ENCODE measurements at regions of chr7 and their contacts with region 1.

Region 1: GRCh38 chr7:38222481-38223096 is 44.5 kb downstream of the STARD3NL start:
- DNase-seq: no peak
- H3K4me3 ChIP-seq: no peak overlapping the region
- H3K27ac ChIP-seq: no peak overlapping the region
- H3K4me1 ChIP-seq: no peaks in the 10 kb centered on the region
- H3K27me3 ChIP-seq: no peaks in the 10 kb centered on the region
- CTCF ChIP-seq: peak; percentile 78 to 89 (median 85)
- EP300 ChIP-seq: no peak
- POLR2A ChIP-seq: no peak

Region 2: DNA sequence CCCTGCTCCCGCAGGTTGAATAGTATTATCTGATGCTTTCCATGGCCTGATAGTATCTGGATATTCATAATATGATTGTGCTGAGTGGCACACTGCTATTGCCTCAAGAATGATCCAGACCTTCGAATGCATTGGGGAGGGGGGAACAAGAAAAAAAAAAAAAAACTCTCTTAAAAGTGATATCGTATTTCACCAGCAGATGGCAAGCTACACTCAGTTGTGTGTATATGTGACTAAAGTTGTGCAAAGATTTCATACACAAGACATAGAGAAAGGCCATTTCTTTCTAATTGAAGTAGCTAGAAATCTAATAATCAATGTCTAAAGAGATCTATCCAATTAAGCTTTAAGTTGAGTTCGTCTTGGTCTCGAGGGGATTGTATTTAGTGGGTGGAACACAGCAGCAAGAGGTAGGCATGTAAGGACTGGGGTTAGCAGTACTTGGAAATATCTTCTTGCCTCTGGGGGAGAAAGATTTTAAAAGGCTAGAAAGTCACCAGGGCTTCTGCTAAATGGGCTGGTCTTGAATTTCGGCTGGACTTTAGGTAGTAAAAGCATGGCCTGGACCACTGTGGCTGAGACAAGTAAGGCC is 321.3 kb before region 1 on chr7:
- intact Hi-C with region 1: loop called (anchors 2 to 5 kb)
- DNase-seq: no peak
- H3K4me3 ChIP-seq: no peak overlapping the region
- H3K27ac ChIP-seq: peak overlapping the region in 1 of 2 donors; percentile 17
- H3K4me1 ChIP-seq: peaks cover 2% of the 10 kb centered on the region
- H3K27me3 ChIP-seq: no peaks in the 10 kb centered on the region
- CTCF ChIP-seq: peak; percentile 63 to 68 (median 66)
- EP300 ChIP-seq: no peak
- POLR2A ChIP-seq: no peak

Region 3: GRCh38 chr7:38107486-38107893 is 115.1 kb before region 1 on chr7:
- intact Hi-C with region 1: loop called in 3 of 4 experiments (anchors 2 to 5 kb)
- DNase-seq: peak; percentile 23 to 67 (median 43)
- H3K4me3 ChIP-seq: no peak overlapping the region
- H3K27ac ChIP-seq: no peak overlapping the region
- H3K4me1 ChIP-seq: peaks cover 2% of the 10 kb centered on the region
- H3K27me3 ChIP-seq: no peaks in the 10 kb centered on the region
- CTCF ChIP-seq: peak; percentile 29 to 42 (median 42)
- EP300 ChIP-seq: no peak
- POLR2A ChIP-seq: no peak

Measured in ovary (tissue), 10 donors.